Right ventricle myocardium inferior (tissue), 1 donor: ENCODE measurements at regions of chr4 and their contacts with region 1.

Region 1: GRCh38 chr4:159175085-159175988 is 72.5 kb downstream of the RAPGEF2 start:
- DNase-seq: peak; percentile 67
- ATAC-seq: peak; percentile 83

Region 2: DNA sequence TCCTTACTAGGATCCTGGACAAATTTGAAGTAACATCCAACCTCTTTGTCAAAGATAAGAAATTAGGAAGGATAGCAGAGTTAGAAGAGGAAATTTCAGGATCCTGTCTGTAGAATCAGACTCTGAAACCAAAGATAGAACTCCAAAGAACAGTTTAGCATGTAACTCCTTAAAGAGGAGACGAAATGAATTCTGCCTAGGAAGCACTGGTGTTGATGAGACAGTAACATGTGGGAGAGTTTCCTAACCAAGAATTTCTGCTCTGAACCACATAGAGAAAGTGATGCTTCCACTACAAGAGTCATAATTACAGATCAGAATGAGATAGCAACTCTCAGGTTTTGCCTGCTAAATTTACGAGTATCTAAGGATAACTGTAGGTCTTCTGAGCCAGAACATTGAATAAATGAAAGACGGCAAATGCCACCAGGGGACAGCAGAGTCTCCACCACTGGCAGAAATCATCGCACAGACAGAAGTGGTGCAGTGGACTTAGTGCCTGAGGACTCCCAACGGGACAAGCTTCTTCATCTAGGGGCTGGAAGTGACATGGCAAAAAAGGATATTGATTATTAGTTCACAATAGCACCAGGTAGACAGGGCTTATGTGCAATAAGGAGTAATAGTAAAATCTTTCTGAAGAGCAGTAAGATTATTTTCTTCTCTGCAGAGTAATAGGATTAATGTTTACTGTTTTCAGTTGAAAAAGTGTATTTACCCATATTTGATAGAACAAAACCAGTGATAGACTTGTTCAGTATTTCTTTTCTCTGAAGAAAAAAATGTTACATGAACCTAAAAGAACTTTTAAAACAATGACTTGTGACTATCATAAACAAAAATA is 445.4 kb before region 1 on chr4:
- intact Hi-C with region 1: loop called (anchors 5 kb)
- DNase-seq: no peak
- ATAC-seq: peak; percentile 93

Region 3: DNA sequence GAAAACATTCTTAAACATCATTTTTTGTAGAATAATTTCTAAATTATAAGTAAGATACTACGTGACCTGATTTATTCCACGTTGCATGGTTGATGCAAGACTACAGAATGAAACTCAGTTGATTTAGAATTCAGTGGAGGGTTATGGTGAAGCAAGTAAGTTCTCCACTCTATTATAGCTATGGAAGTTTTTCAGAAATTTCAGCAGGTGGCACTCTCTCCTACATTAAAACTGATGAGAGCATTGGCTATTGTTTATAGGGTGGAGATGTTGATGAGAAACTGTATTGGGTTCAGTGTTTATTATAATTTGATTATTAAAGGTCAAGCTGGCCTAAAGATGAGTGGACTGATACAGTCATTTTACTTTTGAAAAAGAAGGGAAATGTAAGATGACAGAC is 318.5 kb before region 1 on chr4:
- intact Hi-C with region 1: loop called (anchors 2 kb)
- DNase-seq: no peak
- ATAC-seq: peak; percentile 61

Region 4: GRCh38 chr4:159048166-159048886 is 127.0 kb before region 1 on chr4:
- intact Hi-C with region 1: loop called (anchors 10 kb)
- DNase-seq: peak; percentile 78
- ATAC-seq: peak; percentile 92

Region 5: GRCh38 chr4:159102622-159103383 is 72.5 kb before region 1 on chr4 and contains the start of gene RAPGEF2:
- intact Hi-C with region 1: loop called (anchors 5 kb)
- DNase-seq: peak; percentile 96
- ATAC-seq: peak; percentile 96
- total RNA-seq, gene RAPGEF2: 42.8 TPM

Region 6: GRCh38 chr4:159206427-159206871 is 31.1 kb after region 1 on chr4:
- intact Hi-C with region 1: loop called (anchors 2 kb)
- DNase-seq: no peak
- ATAC-seq: no peak